ENCODE measurements at regions of chr1 and their contacts with region 1.

Region 1: DNA sequence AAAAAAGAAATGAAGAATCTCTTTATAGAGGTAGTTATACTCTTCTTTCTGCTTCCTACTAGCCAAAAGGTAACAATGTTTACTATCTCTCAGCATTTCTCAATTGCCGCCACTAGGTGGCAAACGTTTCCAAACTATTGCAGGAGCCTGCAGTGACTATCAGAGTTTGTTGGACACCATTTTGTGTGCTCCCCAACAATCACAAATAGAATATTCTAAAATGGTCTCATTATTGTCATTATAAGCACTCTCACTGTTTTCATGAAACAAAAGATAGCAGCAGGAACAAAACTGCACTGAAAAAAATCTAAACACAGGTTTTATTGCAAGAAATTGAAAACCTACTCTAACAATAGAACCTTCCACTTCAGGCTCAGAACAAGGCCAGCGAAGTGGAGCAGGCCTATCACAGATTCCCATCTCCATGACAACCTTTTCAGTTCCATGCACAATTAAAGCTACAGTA is 83.9 kb upstream of the PLPPR4 start:
- DNase-seq: peak; percentile 51
- H3K4me3 ChIP-seq: no peak overlapping the region
- H3K27ac ChIP-seq: no peak overlapping the region
- H3K27me3 ChIP-seq: no peaks in the 10 kb centered on the region
- CTCF ChIP-seq: peak; percentile 84

Region 2: DNA sequence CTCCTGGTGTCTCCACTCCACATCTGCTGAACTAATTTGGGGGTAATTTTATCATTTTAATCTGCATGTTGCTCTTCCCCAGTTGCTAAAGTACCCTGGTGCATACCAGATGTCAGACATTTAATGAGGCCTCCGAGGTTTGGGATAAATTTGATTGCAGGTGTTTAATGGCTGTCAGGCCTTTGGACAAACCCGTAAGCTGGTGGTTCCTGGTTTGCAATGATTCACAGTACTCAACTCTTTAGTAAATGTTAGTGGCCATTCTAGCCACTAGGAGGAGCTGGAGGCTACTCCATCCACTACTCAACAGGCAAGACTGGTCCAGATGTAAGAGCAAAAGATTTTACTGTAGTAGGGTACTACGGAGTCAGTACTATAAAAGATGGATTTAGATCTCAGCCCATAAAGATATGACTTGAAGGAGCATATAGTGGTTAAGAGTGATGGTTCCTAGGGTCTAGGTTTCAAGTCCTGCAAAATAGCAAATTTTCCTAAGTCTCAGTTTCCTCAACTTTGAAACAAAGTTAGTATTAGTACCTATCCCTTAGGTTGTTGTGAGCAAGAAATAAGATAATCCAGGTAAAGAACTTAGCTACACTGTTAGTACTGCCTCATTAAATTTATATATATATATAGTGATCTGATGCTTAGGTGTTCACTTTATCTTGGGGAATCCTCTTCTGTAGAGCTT is 386.0 kb before region 1 on chr1:
- CTCF ChIA-PET with region 1: interaction called, 13 read pairs
- POLR2A ChIA-PET with region 1: no interaction called
- DNase-seq: peak; percentile 48
- H3K4me3 ChIP-seq: no peak overlapping the region
- H3K27ac ChIP-seq: no peak overlapping the region
- H3K27me3 ChIP-seq: peaks cover 6% of the 10 kb centered on the region
- CTCF ChIP-seq: peak; percentile 93

Region 3: DNA sequence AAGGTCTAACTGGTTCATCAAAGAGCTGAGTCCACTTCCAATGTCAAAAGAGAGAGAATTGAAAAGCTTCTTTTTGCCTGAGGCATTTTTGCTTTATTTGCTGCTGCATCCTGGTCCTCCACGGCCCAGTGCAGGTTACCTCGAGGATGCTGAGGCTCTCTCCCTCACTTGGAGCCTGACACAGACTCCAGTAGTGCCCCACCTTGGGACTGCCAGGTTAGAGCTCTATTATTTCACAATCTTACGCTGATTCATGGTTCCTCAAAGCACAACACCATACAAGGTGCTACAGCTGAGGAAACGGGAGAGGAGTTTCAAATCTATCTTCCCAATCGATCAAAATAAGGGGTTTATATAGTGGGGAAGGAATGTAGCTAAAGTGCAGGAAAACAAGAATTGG is 70.3 kb after region 1 on chr1:
- CTCF ChIA-PET with region 1: no interaction called
- POLR2A ChIA-PET with region 1: no interaction called
- DNase-seq: no peak
- H3K4me3 ChIP-seq: no peak overlapping the region
- H3K27ac ChIP-seq: no peak overlapping the region
- H3K27me3 ChIP-seq: no peaks in the 10 kb centered on the region
- CTCF ChIP-seq: no peak

Region 4: GRCh38 chr1:99526926-99527477 is 346.6 kb after region 1 on chr1:
- CTCF ChIA-PET with region 1: interaction called, 12 read pairs
- POLR2A ChIA-PET with region 1: no interaction called
- DNase-seq: no peak
- H3K4me3 ChIP-seq: no peak overlapping the region
- H3K27ac ChIP-seq: no peak overlapping the region
- H3K27me3 ChIP-seq: no peaks in the 10 kb centered on the region
- CTCF ChIP-seq: peak; percentile 47

Region 5: DNA sequence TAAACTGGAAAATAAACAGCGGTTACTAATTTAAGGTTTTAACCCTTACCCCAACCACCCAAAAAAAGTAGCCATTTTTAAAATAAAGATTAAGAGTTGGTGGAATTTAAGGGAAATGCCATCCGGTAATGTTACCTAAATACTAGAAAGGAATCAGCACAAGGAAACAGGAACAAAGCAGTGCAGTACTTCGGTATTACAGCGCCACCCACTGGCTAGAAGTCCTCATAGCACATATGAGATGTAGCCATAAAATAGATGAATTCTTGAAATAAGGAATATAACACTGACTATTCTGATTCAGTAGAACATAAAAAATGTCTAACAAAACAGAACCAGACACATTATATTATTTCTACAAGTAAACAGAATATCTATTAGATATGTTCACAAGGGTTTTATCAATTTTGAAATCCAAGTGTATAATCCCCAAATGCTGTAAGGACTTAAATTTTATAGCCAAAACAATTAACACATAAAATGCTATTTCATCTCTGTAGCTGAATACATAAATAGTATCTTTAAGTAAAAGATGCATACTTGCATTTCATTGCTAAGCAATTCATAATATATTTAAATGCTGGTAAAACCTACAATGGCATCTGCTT is 527.3 kb after region 1 on chr1:
- CTCF ChIA-PET with region 1: interaction called, 13 read pairs
- POLR2A ChIA-PET with region 1: no interaction called
- DNase-seq: peak; percentile 11
- H3K4me3 ChIP-seq: no peak overlapping the region
- H3K27ac ChIP-seq: no peak overlapping the region
- H3K27me3 ChIP-seq: no peaks in the 10 kb centered on the region
- CTCF ChIP-seq: peak; percentile 87